B cell (primary cell): ENCODE measurements at regions of chr7 and their contacts with region 1.

Region 1: GRCh38 chr7:7761340-7761980 is 43.1 kb upstream of the RPA3 start:
- DNase-seq: peak; percentile 63
- ATAC-seq: peak; percentile 64
- H3K4me3 ChIP-seq: peak overlapping the region; percentile 46 to 73 (median 60)
- H3K4me3 Mint-ChIP-seq: peak overlapping the region; percentile 91
- H3K27ac ChIP-seq: peak overlapping the region; percentile 47 to 75
- H3K27ac Mint-ChIP-seq: peak overlapping the region; percentile 89
- H3K4me1 ChIP-seq: peaks cover 17 to 22% of the 10 kb centered on the region in 2 donors
- H3K4me1 Mint-ChIP-seq: peaks cover 35% of the 10 kb centered on the region
- H3K27me3 ChIP-seq: no peaks in the 10 kb centered on the region
- H3K27me3 Mint-ChIP-seq: no peaks in the 10 kb centered on the region
- CTCF ChIP-seq: peak; percentile 68

Region 2: GRCh38 chr7:7489546-7489945 is 271.9 kb before region 1 on chr7:
- CTCF ChIA-PET with region 1: no interaction called
- POLR2A ChIA-PET with region 1: no interaction called
- intact Hi-C with region 1: no loop called
- DNase-seq: no peak
- ATAC-seq: no peak
- H3K4me3 ChIP-seq: no peak overlapping the region
- H3K4me3 Mint-ChIP-seq: peak overlapping the region; percentile 53
- H3K27ac ChIP-seq: no peak overlapping the region
- H3K27ac Mint-ChIP-seq: peak overlapping the region; percentile 12
- H3K4me1 ChIP-seq: peaks cover 19 to 22% of the 10 kb centered on the region in 2 donors
- H3K4me1 Mint-ChIP-seq: peaks cover 33% of the 10 kb centered on the region
- H3K27me3 ChIP-seq: no peaks in the 10 kb centered on the region
- H3K27me3 Mint-ChIP-seq: no peaks in the 10 kb centered on the region
- CTCF ChIP-seq: no peak

Region 3: DNA sequence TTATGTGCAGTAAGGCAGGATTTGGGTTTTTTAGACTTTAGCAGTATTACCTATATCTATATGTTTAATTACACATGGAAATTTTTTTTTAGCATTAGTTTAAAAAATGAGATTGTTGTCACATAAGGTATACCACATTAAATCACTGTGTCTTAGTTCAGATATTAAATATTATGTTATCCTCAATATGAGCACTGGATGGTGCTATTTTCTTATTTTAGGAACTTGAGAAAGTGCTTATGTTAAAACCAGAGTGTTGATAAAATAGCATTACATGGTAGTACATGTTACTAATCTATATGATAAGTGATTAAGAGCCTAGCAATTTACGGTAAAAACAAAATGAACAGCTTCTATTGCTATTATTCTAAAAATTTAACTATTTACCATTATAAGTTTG is 166.0 kb before region 1 on chr7:
- CTCF ChIA-PET with region 1: interaction called, 6 read pairs
- POLR2A ChIA-PET with region 1: no interaction called
- intact Hi-C with region 1: loop called (anchors 1 kb)
- DNase-seq: peak; percentile 58
- ATAC-seq: peak; percentile 33
- H3K4me3 ChIP-seq: no peak overlapping the region
- H3K4me3 Mint-ChIP-seq: no peak overlapping the region
- H3K27ac ChIP-seq: no peak overlapping the region
- H3K27ac Mint-ChIP-seq: no peak overlapping the region
- H3K4me1 ChIP-seq: no peaks in the 10 kb centered on the region
- H3K4me1 Mint-ChIP-seq: no peaks in the 10 kb centered on the region
- H3K27me3 ChIP-seq: no peaks in the 10 kb centered on the region
- H3K27me3 Mint-ChIP-seq: no peaks in the 10 kb centered on the region
- CTCF ChIP-seq: peak; percentile 75

Region 4: GRCh38 chr7:7640221-7641128 is 121.0 kb before region 1 on chr7 and contains the start of gene UMAD1:
- CTCF ChIA-PET with region 1: no interaction called
- POLR2A ChIA-PET with region 1: interaction called, 5 read pairs
- intact Hi-C with region 1: loop called (anchors 5 kb)
- DNase-seq: peak; percentile 99
- ATAC-seq: peak; percentile 91
- H3K4me3 ChIP-seq: peak within 1 kb of the TSS; percentile 83 to 99 (median 93)
- H3K4me3 Mint-ChIP-seq: peak within 1 kb of the TSS; percentile 87
- H3K27ac ChIP-seq: peak within 1 kb of the TSS; percentile 98 to 99
- H3K27ac Mint-ChIP-seq: peak within 1 kb of the TSS; percentile 98
- H3K4me1 ChIP-seq: peaks cover 15 to 17% of the 10 kb centered on the region in 2 donors
- H3K4me1 Mint-ChIP-seq: peaks cover 45% of the 10 kb centered on the region
- H3K27me3 ChIP-seq: no peaks in the 10 kb centered on the region
- H3K27me3 Mint-ChIP-seq: no peaks in the 10 kb centered on the region
- CTCF ChIP-seq: no peak
- total RNA-seq, gene UMAD1: 25.9 and 27.3 TPM in 2 replicates

Region 5: DNA sequence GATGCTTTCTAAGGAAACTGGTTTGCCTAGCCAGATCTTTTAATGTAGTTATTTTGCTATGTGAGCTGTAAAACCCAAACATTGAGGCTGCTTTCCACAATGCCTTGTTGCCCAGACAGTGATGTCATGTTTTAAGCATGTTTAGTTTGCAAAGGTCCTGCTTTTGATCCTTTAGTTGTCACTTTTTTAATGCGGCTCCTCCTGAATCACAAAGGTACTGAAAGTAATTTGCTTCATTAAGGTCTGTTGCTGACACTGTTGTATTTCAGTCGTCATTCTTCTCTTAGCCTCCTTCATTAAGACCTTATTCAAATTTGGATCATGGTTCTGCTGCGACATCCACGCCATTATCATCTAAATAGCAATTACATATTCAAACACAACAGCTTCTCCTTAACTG is 53.7 kb before region 1 on chr7:
- CTCF ChIA-PET with region 1: no interaction called
- POLR2A ChIA-PET with region 1: no interaction called
- intact Hi-C with region 1: no loop called
- DNase-seq: no peak
- ATAC-seq: no peak
- H3K4me3 ChIP-seq: no peak overlapping the region
- H3K4me3 Mint-ChIP-seq: no peak overlapping the region
- H3K27ac ChIP-seq: no peak overlapping the region
- H3K27ac Mint-ChIP-seq: no peak overlapping the region
- H3K4me1 ChIP-seq: peaks cover 12% of the 10 kb centered on the region in 2 donors
- H3K4me1 Mint-ChIP-seq: peaks cover 34% of the 10 kb centered on the region
- H3K27me3 ChIP-seq: no peaks in the 10 kb centered on the region
- H3K27me3 Mint-ChIP-seq: no peaks in the 10 kb centered on the region
- CTCF ChIP-seq: no peak

Region 6: GRCh38 chr7:7772397-7772821 is 10.9 kb after region 1 on chr7:
- CTCF ChIA-PET with region 1: interaction called, 17 read pairs
- POLR2A ChIA-PET with region 1: no interaction called
- intact Hi-C with region 1: loop called (anchors 1 kb)
- DNase-seq: peak; percentile 59
- ATAC-seq: peak; percentile 67
- H3K4me3 ChIP-seq: peak overlapping the region; percentile 34 to 60 (median 42)
- H3K4me3 Mint-ChIP-seq: peak overlapping the region; percentile 86
- H3K27ac ChIP-seq: peak overlapping the region; percentile 67 to 76
- H3K27ac Mint-ChIP-seq: peak overlapping the region; percentile 90
- H3K4me1 ChIP-seq: peaks cover 25 to 30% of the 10 kb centered on the region in 2 donors
- H3K4me1 Mint-ChIP-seq: peaks cover 33% of the 10 kb centered on the region
- H3K27me3 ChIP-seq: no peaks in the 10 kb centered on the region
- H3K27me3 Mint-ChIP-seq: no peaks in the 10 kb centered on the region
- CTCF ChIP-seq: no peak

Region 7: GRCh38 chr7:7812112-7812511 is 50.7 kb after region 1 on chr7:
- CTCF ChIA-PET with region 1: no interaction called
- POLR2A ChIA-PET with region 1: no interaction called
- intact Hi-C with region 1: no loop called
- DNase-seq: no peak
- ATAC-seq: no peak
- H3K4me3 ChIP-seq: no peak overlapping the region
- H3K4me3 Mint-ChIP-seq: no peak overlapping the region
- H3K27ac ChIP-seq: no peak overlapping the region
- H3K27ac Mint-ChIP-seq: no peak overlapping the region
- H3K4me1 ChIP-seq: peaks cover 26% of the 10 kb centered on the region in 2 donors
- H3K4me1 Mint-ChIP-seq: peaks cover 39% of the 10 kb centered on the region
- H3K27me3 ChIP-seq: no peaks in the 10 kb centered on the region
- H3K27me3 Mint-ChIP-seq: no peaks in the 10 kb centered on the region
- CTCF ChIP-seq: no peak

Region 8: DNA sequence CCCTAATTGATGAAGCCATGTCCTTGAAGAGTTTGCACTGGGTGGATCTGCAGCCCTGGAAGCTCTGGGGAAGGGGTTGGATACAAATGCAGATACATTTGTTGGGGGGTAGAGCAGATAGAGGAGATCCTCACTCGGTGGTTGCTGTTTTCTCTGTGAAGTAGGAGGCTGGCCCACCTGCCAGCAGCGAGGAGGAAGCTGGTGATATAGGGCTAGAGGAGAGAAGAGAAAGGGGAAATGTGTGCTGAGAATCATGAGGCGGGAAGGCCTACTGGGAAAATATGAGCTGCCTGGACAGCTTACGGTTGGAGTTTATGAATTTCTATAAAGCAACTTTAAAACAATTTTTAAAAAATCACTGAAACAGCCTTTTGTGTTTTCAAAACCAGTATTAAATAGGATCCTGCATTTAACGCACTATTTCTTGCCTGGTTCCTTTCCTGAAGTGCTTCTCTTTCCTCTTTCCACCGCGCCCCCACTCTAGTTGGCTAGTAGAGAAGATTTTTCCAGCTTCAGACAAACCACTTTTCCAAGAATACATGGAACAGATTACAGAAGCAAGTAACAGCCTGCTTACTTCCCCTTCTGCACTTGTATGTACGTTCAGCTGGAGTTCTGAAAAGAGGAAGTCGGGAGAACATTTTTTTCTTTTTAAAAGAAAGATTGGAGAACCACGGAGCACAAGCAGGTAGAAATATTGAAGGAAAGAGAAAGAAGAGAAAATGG is 106.5 kb after region 1 on chr7:
- CTCF ChIA-PET with region 1: no interaction called
- POLR2A ChIA-PET with region 1: no interaction called
- intact Hi-C with region 1: loop called (anchors 5 kb)
- DNase-seq: peak; percentile 66
- ATAC-seq: peak; percentile 69
- H3K4me3 ChIP-seq: peak overlapping the region in 3 of 5 experiments; percentile 19 to 26 (median 25)
- H3K4me3 Mint-ChIP-seq: no peak overlapping the region
- H3K27ac ChIP-seq: peak overlapping the region; percentile 30 to 65
- H3K27ac Mint-ChIP-seq: no peak overlapping the region
- H3K4me1 ChIP-seq: peaks cover 20 to 24% of the 10 kb centered on the region in 2 donors
- H3K4me1 Mint-ChIP-seq: no peaks in the 10 kb centered on the region
- H3K27me3 ChIP-seq: no peaks in the 10 kb centered on the region
- H3K27me3 Mint-ChIP-seq: no peaks in the 10 kb centered on the region
- CTCF ChIP-seq: no peak

Region 9: GRCh38 chr7:7989133-7989984 is 227.9 kb after region 1 on chr7:
- CTCF ChIA-PET with region 1: no interaction called
- POLR2A ChIA-PET with region 1: no interaction called
- intact Hi-C with region 1: no loop called
- DNase-seq: no peak
- ATAC-seq: no peak
- H3K4me3 ChIP-seq: no peak overlapping the region
- H3K4me3 Mint-ChIP-seq: peak overlapping the region; percentile 65
- H3K27ac ChIP-seq: peak overlapping the region in 1 of 2 donors; percentile 40
- H3K27ac Mint-ChIP-seq: peak overlapping the region; percentile 38
- H3K4me1 ChIP-seq: peaks cover 0 to 8% of the 10 kb centered on the region in 2 donors
- H3K4me1 Mint-ChIP-seq: peaks cover 43% of the 10 kb centered on the region
- H3K27me3 ChIP-seq: no peaks in the 10 kb centered on the region
- H3K27me3 Mint-ChIP-seq: no peaks in the 10 kb centered on the region
- CTCF ChIP-seq: no peak